IMR-90 (cell line): ENCODE measurements at regions of chr1 and their contacts with region 1.

Region 1: DNA sequence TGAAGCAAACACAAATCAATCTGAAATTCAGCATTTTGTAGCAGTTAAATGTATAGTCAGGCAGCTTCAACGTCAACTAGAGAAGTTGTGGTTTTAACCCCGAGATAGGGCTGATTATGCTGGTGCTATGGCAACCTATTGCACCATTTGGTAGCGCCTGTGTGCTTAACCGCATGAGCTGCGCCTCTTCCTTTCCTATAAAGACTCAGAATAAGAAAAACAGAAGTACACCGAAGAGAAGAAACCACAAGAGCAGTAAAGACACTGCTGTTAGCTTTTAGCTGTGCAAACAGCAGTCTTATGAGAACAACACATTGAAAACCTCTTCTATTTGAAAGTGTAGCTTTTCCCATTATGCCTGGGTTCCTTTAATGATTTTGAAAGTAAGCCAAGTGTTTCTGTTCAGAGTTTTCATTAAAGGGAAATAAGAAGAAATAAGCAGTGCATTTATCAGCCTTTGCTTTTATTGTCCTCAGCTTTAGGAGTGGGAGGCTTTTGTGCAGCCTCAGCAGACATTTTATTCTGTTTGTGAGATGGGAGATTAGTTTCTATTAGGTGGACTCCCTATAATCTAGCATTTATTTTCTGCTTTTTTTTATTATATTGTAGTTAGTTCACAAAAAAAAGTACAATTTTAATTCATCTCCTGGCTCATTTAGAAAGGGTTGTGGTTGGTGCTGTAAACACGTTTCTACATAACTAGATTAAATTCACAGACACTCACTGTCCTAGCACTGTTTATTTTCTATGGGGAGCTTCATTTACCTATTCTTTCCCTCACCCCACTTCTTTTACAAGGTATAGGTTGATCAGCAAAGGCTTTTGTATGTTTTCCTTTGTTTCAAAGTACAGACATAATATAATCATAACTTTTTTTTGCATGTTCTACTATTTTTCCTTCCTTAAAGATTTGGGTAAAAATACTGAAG is 43.3 kb downstream of the PTPRC start:
- DNase-seq: peak; percentile 93
- ATAC-seq: peak; percentile 89
- H3K4me3 ChIP-seq: peak overlapping the region; percentile 11; the same call in 1 of the 2 replicates
- H3K27ac ChIP-seq: peak overlapping the region; percentile 6; the same call in 1 of the 2 replicates
- H3K4me1 ChIP-seq: no peaks in the 10 kb centered on the region
- H3K27me3 ChIP-seq: no peaks in the 10 kb centered on the region
- CTCF ChIP-seq: no peak
- POLR2A ChIP-seq: 0 out of 2 replicates have a peak, but pooled peaks have one; percentile 18
- RAD21 ChIP-seq: peak; percentile 34

Region 2: GRCh38 chr1:197526736-197527371 is 1155.2 kb before region 1 on chr1:
- CTCF ChIA-PET with region 1: no interaction called
- POLR2A ChIA-PET with region 1: no interaction called
- dilution Hi-C with region 1: no loop called
- in situ Hi-C with region 1: loop called (anchors 25 kb)
- intact Hi-C with region 1: loop called (anchors 5 kb)
- DNase-seq: peak; percentile 44
- ATAC-seq: no peak
- H3K4me3 ChIP-seq: no peak overlapping the region
- H3K27ac ChIP-seq: no peak overlapping the region
- H3K4me1 ChIP-seq: no peaks in the 10 kb centered on the region
- H3K27me3 ChIP-seq: no peaks in the 10 kb centered on the region
- CTCF ChIP-seq: peak; percentile 55
- POLR2A ChIP-seq: no peak
- RAD21 ChIP-seq: peak; percentile 45

Region 3: GRCh38 chr1:197902454-197903195 is 779.5 kb before region 1 on chr1 and contains the start of gene C1orf53:
- CTCF ChIA-PET with region 1: no interaction called
- POLR2A ChIA-PET with region 1: no interaction called
- dilution Hi-C with region 1: no loop called
- in situ Hi-C with region 1: loop called (anchors 25 kb)
- intact Hi-C with region 1: no loop called
- DNase-seq: peak; percentile 86
- ATAC-seq: peak; percentile 99
- H3K4me3 ChIP-seq: peak within 1 kb of the TSS; percentile 82
- H3K27ac ChIP-seq: peak within 1 kb of the TSS; percentile 89
- H3K4me1 ChIP-seq: no peaks in the 10 kb centered on the region
- H3K27me3 ChIP-seq: peaks cover 7% of the 10 kb centered on the region
- CTCF ChIP-seq: no peak
- POLR2A ChIP-seq: no peak; the same call in 1 of the 2 replicates
- RAD21 ChIP-seq: no peak
- total RNA-seq, gene C1orf53: 4.2 and 4.8 TPM in 2 replicates

Region 4: GRCh38 chr1:198088360-198089071 is 593.6 kb before region 1 on chr1:
- CTCF ChIA-PET with region 1: no interaction called
- POLR2A ChIA-PET with region 1: no interaction called
- dilution Hi-C with region 1: no loop called
- in situ Hi-C with region 1: no loop called
- intact Hi-C with region 1: loop called (anchors 1 kb)
- DNase-seq: peak; percentile 75
- ATAC-seq: peak; percentile 94
- H3K4me3 ChIP-seq: peak overlapping the region; percentile 23; the same call in 1 of the 2 replicates
- H3K27ac ChIP-seq: peak overlapping the region; percentile 45
- H3K4me1 ChIP-seq: peaks cover 3% of the 10 kb centered on the region
- H3K27me3 ChIP-seq: no peaks in the 10 kb centered on the region
- CTCF ChIP-seq: peak; percentile 70
- POLR2A ChIP-seq: no peak
- RAD21 ChIP-seq: peak; percentile 75

Region 5: GRCh38 chr1:198157241-198157846 is 524.8 kb before region 1 on chr1:
- CTCF ChIA-PET with region 1: interaction called, 3 read pairs
- POLR2A ChIA-PET with region 1: no interaction called
- dilution Hi-C with region 1: no loop called
- in situ Hi-C with region 1: no loop called
- intact Hi-C with region 1: loop called (anchors 1 kb)
- DNase-seq: peak; percentile 97
- ATAC-seq: peak; percentile 62
- H3K4me3 ChIP-seq: peak overlapping the region; percentile 77
- H3K27ac ChIP-seq: peak overlapping the region; percentile 93
- H3K4me1 ChIP-seq: peaks cover 6% of the 10 kb centered on the region
- H3K27me3 ChIP-seq: no peaks in the 10 kb centered on the region
- CTCF ChIP-seq: no peak
- POLR2A ChIP-seq: no peak; the same call in 1 of the 2 replicates
- RAD21 ChIP-seq: no peak

Region 6: GRCh38 chr1:198465201-198466144 is 216.6 kb before region 1 on chr1:
- CTCF ChIA-PET with region 1: interaction called, 5 read pairs
- POLR2A ChIA-PET with region 1: interaction called, 3 read pairs
- dilution Hi-C with region 1: no loop called
- in situ Hi-C with region 1: loop called (anchors 10 kb)
- intact Hi-C with region 1: loop called (anchors 1 kb)
- DNase-seq: peak; percentile 70
- ATAC-seq: peak; percentile 88
- H3K4me3 ChIP-seq: no peak overlapping the region
- H3K27ac ChIP-seq: no peak overlapping the region
- H3K4me1 ChIP-seq: peaks cover 4% of the 10 kb centered on the region
- H3K27me3 ChIP-seq: no peaks in the 10 kb centered on the region
- CTCF ChIP-seq: peak; percentile 74
- POLR2A ChIP-seq: no peak
- RAD21 ChIP-seq: peak; percentile 85